Left colon (tissue), 2 donors: ENCODE measurements at regions of chr2 and their contacts with region 1.

Region 1: DNA sequence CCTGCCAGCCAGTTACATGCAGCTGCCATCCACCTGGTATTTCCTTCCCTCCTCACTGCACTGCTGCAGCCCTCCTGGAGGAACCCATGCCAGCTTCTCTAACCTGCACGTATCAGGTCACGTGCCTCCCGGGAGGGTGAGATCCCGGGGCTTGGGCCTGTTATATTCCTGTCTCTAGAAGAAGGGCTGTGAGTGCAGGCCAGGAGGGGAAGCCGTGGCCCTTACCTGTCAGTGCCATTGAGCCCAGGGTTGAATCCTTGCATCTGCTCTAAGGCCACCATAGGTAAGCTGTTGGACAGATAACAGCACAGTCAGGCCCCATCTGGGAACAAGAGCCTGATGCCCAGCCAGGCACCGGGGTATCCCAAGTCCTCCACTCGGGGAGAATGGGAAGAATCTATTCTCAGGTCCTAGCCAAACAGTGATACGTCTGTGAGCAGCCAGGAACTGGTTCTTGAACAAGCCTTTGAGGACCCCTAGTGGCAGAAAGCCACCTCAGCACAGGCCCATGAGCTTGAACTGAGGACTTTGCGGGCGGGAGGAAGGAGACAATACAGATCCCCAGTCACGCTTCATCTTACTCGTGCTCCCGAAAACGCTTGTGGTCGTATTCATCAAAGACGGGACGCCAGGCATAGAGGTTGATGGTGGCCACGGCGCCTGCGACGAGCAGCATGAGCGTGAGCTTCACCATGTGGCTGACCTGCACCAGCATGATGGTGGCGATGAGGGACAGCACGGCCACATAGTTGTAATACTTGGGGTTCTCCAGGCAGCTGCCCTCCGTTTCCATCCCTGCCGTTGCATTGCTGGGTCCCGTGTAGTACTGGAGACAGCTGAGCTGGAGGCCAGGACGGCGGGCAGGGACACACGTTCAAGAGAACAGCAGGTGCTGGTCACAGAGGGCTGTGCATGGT is 34.4 kb downstream of the CENPO start:
- DNase-seq: peak; percentile 70 to 84
- ATAC-seq: peak; percentile 89

Region 2: GRCh38 chr2:24409700-24410556 is 417.7 kb before region 1 on chr2:
- intact Hi-C with region 1: loop called (anchors 5 to 10 kb)
- DNase-seq: peak in 1 of 2 donors; percentile 22
- ATAC-seq: peak; percentile 89